Mammary epithelial cell (primary cell): ENCODE measurements at regions of chr13 and their contacts with region 1.

Region 1: GRCh38 chr13:76954538-76954937 is 6.2 kb downstream of the ACOD1 start:
- DNase-seq: no peak
- H3K4me3 ChIP-seq: no peak overlapping the region
- H3K27ac ChIP-seq: no peak overlapping the region
- H3K4me1 ChIP-seq: no peaks in the 10 kb centered on the region
- H3K27me3 ChIP-seq: peaks cover 3% of the 10 kb centered on the region
- CTCF ChIP-seq: no peak

Region 2: DNA sequence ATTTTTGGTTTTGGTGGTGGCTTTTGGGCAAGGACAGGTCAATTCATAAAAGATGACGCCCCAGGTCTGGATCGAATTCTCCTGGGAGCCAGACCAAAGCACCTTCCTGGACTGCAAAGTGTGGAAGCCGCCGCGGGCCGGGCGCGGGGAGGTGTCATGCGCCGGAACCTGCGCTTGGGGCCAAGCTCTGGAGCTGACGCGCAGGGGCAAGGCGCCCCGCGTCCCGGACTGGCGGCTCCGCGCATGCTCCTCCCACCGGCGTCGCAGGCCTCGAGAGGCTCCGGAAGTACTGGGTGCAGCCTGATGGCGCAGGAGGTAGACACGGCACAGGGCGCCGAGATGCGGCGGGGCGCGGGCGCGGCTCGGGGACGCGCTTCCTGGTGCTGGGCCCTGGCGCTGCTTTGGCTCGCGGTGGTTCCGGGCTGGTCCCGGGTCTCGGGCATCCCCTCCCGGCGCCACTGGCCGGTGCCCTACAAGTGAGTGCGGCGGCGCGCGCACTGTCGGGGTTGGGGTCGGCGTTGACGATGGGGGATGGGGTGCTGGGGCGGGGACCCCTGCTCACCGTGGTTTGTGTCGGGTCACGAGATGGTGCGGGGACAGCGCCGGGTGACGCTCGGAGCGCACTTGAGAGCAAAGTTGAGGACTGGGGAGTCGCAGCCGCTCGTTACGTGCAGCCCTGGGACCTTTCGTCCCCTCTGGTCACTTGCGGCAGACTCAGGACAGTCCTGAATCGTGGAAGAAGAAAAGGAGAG is 37.4 kb after region 1 on chr13 and contains the start of gene CLN5:
- CTCF ChIA-PET with region 1: no interaction called
- dilution Hi-C with region 1: loop called (anchors 5 kb)
- in situ Hi-C with region 1: no loop called
- intact Hi-C with region 1: no loop called
- DNase-seq: peak; percentile 91
- H3K4me3 ChIP-seq: peak within 1 kb of the TSS; percentile 69 to 89 (median 88)
- H3K27ac ChIP-seq: peak within 1 kb of the TSS; percentile 87
- H3K4me1 ChIP-seq: peaks cover 28% of the 10 kb centered on the region
- H3K27me3 ChIP-seq: no peaks in the 10 kb centered on the region
- CTCF ChIP-seq: no peak
- total RNA-seq, gene CLN5: 24.0 to 45.8 TPM

Region 3: GRCh38 chr13:77056382-77056781 is 101.8 kb after region 1 on chr13:
- CTCF ChIA-PET with region 1: no interaction called
- dilution Hi-C with region 1: no loop called
- in situ Hi-C with region 1: no loop called
- intact Hi-C with region 1: no loop called
- DNase-seq: no peak
- H3K4me3 ChIP-seq: no peak overlapping the region
- H3K27ac ChIP-seq: no peak overlapping the region
- H3K4me1 ChIP-seq: no peaks in the 10 kb centered on the region
- H3K27me3 ChIP-seq: no peaks in the 10 kb centered on the region
- CTCF ChIP-seq: no peak